ENCODE measurements at regions of chr5 and their contacts with region 1.

Region 1: DNA sequence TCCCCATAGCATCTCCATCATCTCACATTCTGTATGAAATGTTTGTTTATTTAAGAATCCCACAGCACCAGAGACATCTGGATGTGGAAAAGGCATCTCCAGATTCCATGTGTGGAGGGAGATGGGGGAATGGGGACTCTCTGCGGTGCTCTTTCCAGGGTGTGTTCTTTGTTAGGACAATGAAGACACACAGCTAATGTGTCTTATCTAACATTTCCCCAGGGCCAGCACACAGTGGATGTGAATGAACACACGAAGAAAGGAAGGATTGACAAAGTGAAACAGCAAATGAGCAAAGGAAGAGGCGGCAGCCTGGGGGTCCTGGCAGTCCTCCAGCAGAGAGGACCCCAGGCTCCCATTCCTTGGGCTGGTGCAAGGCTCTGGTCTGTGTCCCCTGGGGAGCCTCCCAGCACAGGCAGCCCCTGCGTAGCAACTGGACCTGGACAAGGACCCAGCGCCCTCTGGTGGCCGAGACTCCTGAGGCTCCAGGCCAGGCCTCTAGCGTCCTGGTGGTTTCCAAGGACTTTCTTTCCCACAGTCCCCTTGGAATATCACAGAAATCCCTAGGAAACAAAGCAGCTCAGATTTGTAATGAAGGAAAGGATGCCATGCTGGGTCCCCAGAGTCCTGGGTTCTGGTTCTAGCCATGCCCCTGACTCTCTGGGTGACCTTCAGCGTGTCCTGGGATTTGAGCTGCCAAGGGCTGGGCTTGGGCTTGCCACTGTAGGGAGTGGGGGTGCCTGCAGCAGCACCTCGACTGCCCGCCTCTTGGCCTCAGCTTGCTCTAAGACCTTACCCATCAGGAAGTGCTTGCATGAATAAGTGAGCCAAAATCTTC is 3.5 kb upstream of the PDLIM7 start:
- DNase-seq: peak; percentile 92
- H3K4me3 ChIP-seq: no peak overlapping the region
- H3K27ac ChIP-seq: peak overlapping the region; percentile 49
- H3K4me1 ChIP-seq: peaks cover 49% of the 10 kb centered on the region
- H3K27me3 ChIP-seq: no peaks in the 10 kb centered on the region
- CTCF ChIP-seq: peak; percentile 98

Region 2: GRCh38 chr5:177370488-177371119 is 130.3 kb before region 1 on chr5:
- intact Hi-C with region 1: no loop called
- DNase-seq: peak; percentile 70
- H3K4me3 ChIP-seq: peak overlapping the region; percentile 61
- H3K27ac ChIP-seq: peak overlapping the region; percentile 3
- H3K4me1 ChIP-seq: peaks cover 43% of the 10 kb centered on the region
- H3K27me3 ChIP-seq: peaks cover 18% of the 10 kb centered on the region
- CTCF ChIP-seq: peak; percentile 53

Region 3: GRCh38 chr5:177390363-177391300 is 110.3 kb before region 1 on chr5:
- intact Hi-C with region 1: loop called (anchors 5 kb)
- DNase-seq: peak; percentile 72
- H3K4me3 ChIP-seq: no peak overlapping the region
- H3K27ac ChIP-seq: no peak overlapping the region
- H3K4me1 ChIP-seq: peaks cover 7% of the 10 kb centered on the region
- H3K27me3 ChIP-seq: peaks cover 69% of the 10 kb centered on the region
- CTCF ChIP-seq: peak; percentile 99